GM10248 (cell line): ENCODE measurements at regions of chr1 and their contacts with region 1.

Region 1: DNA sequence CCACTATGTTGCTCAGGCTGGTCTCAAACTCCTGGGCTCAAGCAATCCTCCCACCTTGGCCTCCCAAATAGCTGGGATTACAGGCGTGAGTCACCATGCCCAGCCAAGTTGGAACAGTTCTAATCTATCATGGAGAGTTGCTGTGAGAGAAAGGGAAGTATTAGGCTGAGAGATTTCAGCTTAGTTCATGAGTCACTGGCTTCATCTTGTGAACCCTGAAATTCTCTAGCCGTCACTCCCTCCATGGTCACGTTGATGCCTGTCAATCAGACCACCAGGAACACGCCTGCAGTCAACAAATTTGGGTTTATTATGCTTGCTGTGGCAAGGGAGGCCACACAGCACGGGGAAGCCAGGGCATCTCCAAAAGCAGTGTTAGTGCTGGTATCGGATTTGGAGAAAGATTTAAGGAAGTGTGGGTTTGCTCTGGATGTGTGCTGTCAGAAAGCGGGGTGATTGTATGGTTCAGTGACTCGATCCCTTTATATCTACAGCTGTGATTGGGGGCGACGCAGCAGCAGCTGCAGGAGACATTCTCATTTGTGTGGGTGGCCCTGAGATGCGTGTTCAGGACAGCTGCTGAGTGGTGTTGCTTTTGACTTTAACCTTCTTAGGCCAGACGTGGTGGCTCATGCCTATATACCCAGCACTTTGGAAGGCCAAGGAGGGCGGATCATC is 18.7 kb downstream of the UQCRHL start:
- DNase-seq: no peak
- CTCF ChIP-seq: no peak

Region 2: GRCh38 chr1:14415395-14415794 is 1373.4 kb before region 1 on chr1:
- CTCF ChIA-PET with region 1: no interaction called
- POLR2A ChIA-PET with region 1: no interaction called
- DNase-seq: no peak
- CTCF ChIP-seq: no peak

Region 3: GRCh38 chr1:15771836-15772515 is 16.8 kb before region 1 on chr1:
- CTCF ChIA-PET with region 1: interaction called, 12 read pairs
- POLR2A ChIA-PET with region 1: no interaction called
- DNase-seq: no peak
- CTCF ChIP-seq: no peak

Region 4: GRCh38 chr1:15820478-15820877 is 31.7 kb after region 1 on chr1:
- CTCF ChIA-PET with region 1: interaction called, 10 read pairs
- POLR2A ChIA-PET with region 1: no interaction called
- DNase-seq: no peak
- CTCF ChIP-seq: no peak

Region 5: DNA sequence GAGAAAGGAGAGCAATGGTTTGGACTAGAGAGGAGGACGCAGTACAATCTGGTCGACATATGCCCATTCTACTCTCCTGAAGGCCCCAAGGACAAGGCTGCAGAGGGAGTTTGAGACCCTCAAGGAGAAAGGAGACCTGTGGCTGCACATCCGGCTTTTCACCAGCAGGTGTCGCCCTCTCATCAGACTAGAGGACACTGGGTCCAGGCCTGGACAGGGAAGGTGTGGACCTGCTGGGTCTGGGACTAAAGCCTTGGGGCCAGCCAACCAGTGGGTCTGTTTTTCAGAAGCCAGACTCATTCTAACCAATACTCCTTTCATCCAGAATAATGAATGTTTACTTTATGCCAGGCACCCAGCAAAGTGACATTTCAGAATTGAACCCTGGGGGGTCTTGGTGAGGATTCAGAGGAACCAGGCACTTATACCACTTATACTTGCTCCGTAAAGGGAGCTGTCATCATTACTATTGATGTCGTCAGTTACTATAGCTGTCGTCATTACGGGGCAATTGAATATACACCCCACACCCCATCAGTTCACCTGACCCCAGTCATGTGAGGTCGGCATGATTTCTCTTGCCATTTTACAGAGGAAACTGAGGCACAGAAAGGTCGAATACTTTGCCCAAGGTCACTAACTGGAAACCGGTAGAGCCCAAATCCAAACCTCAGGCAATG is 220.4 kb after region 1 on chr1:
- CTCF ChIA-PET with region 1: interaction called, 11 read pairs
- POLR2A ChIA-PET with region 1: no interaction called
- DNase-seq: peak; percentile 71
- CTCF ChIP-seq: peak; percentile 94

Region 6: DNA sequence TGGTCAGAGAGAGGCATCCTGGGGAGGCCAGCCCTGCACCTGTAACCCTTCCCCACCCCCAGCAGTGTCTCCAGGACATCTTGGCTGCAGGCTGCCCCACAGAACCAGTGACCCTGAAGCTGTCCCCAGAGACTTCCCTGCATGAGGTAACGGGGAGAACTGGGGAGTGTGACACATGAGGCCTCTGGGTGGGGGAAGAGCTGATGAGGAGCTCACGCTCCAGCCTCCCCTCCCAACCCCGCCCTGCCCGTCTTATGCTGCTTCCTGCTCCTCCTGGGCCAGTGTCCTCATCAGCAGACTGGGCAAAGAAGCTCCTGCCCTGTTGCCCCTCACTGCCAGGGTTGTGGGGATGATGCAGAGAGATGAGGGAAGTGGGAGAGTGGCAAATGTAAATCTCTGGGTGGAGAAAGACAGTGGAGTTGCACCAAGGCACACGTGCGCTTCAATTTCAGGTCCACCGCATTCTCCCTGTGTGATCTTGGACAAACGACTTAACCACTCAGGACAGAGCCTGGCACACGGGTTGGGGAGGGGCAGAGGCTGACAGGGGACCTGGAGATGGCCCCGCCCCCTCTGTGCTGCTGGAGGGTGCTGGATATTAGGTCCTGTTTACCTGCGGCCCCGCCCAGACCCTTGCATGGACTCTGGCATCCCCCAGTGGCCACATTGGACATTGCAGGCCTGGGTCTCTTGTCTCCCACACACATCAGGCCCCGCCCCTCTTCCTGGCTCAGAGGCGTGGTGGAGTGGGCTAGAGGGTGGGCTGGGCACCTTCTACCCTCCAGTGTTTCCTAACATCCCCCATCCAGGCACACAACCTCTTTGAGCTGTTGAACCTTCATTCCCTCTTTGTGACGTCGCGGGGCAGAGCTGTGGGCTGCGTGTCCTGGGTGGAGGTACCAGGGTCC is 267.1 kb after region 1 on chr1:
- CTCF ChIA-PET with region 1: interaction called, 13 read pairs
- POLR2A ChIA-PET with region 1: no interaction called
- DNase-seq: peak; percentile 93
- CTCF ChIP-seq: peak; percentile 98